Endothelial cell of umbilical vein (primary cell): ENCODE measurements at regions of chr12 and their contacts with region 1.

Region 1: GRCh38 chr12:120228291-120229070 is 27.6 kb upstream of the RPLP0 start:
- DNase-seq: peak; percentile 80
- H3K4me3 ChIP-seq: no peak overlapping the region
- H3K27ac ChIP-seq: peak overlapping the region; percentile 100
- H3K4me1 ChIP-seq: peaks cover 72% of the 10 kb centered on the region
- H3K27me3 ChIP-seq: no peaks in the 10 kb centered on the region
- CTCF ChIP-seq: peak; percentile 90 to 94
- POLR2A ChIP-seq: no peak

Region 2: GRCh38 chr12:120194534-120195395 is 33.7 kb before region 1 on chr12 and contains the start of gene GCN1:
- CTCF ChIA-PET with region 1: interaction called, 32 read pairs
- POLR2A ChIA-PET with region 1: interaction called, 46 read pairs
- dilution Hi-C with region 1: no loop called
- intact Hi-C with region 1: no loop called
- DNase-seq: peak; percentile 85
- H3K4me3 ChIP-seq: peak within 1 kb of the TSS; percentile 22 to 76 (median 67)
- H3K27ac ChIP-seq: peak within 1 kb of the TSS; percentile 74
- H3K4me1 ChIP-seq: peaks cover 48% of the 10 kb centered on the region
- H3K27me3 ChIP-seq: no peaks in the 10 kb centered on the region
- CTCF ChIP-seq: no peak
- POLR2A ChIP-seq: peak; percentile 59
- total RNA-seq, gene GCN1: 79.1 and 101 TPM in 2 replicates

Region 3: DNA sequence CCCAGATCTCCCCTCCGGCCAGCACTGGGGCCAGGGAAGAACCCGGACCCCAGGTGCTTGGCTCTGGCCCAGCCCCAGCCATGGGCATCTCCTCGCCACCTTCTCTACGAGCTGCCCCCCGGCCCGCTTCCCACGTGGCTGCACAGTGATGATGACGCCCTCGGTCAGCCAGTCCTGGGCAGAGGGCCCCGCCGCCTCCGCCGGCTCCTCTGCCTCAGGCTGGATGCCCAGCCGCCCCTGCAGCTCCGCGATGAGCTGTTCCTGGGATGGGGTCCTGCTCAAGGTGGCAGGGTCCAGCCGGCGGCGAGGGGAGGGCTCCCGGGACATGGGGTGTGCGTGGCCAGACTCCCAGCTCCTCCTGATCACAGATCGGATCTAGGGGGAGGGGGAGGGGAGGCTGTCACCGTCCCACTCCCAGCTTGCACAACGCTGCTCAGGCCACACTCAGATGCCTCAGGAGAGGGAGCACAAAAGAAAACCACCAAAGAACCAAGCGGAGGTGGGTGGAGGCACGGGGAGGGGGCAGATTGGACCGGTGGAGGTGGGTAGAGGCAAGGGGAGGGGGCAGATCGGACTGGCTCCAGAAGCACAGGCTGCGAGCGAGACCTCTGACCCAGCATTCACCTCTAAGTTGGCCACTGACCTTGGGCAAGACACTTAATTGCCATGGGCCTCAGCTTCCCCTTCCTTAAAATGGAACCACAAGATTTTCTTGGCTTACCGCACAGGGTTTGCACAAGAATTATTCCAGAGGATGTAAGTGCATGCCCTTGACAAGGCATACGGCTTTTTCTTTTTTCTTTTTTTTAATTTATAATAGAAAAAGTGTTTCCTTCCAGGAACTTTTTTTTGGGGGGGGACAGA is 11.5 kb before region 1 on chr12:
- CTCF ChIA-PET with region 1: interaction called, 22 read pairs
- POLR2A ChIA-PET with region 1: no interaction called
- dilution Hi-C with region 1: no loop called
- intact Hi-C with region 1: no loop called
- DNase-seq: no peak
- H3K4me3 ChIP-seq: no peak overlapping the region
- H3K27ac ChIP-seq: no peak overlapping the region
- H3K4me1 ChIP-seq: no peaks in the 10 kb centered on the region
- H3K27me3 ChIP-seq: no peaks in the 10 kb centered on the region
- CTCF ChIP-seq: no peak
- POLR2A ChIP-seq: peak; percentile 25

Region 4: DNA sequence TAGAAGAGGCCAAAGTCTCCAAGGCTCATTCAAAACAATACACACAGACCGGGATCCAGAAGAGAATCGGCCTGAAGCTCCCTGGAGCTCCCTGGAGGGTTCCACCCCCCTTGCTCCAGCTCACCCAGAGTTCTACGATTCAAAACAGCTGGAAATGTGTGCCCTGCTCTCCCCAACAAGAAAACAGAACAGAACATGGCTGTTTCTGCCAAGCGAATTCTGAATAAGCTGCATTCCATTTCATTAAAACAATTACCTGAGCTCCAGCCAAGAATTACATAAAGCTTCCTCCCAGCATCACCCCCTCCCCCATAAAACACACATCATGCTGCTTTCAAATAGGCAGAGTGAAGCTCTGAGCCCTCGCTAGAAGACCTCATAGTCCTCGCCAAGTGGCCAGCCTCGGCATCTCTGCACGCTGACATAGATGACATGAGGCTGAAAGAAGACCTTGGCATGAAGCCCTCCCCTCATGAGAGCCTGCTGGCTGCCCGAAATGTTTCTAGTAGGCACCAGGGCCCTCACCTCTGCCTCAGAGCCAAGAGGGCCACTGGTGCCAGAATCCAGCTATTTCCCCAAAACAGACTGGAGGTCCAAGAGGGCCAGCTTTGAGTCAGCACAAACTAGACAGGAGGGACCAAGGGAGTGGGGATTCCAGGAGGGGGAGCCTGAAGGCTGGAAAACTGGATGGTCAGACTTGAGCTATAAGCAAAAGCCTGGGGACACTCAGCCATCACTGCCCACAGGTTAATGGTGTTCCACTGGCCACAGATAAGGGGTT is 28.8 kb after region 1 on chr12:
- CTCF ChIA-PET with region 1: interaction called, 1,402 read pairs
- POLR2A ChIA-PET with region 1: interaction called, 88 read pairs
- dilution Hi-C with region 1: no loop called
- intact Hi-C with region 1: loop called (anchors 1 kb)
- DNase-seq: peak; percentile 98
- H3K4me3 ChIP-seq: no peak overlapping the region
- H3K27ac ChIP-seq: peak overlapping the region; percentile 96
- H3K4me1 ChIP-seq: peaks cover 71% of the 10 kb centered on the region
- H3K27me3 ChIP-seq: no peaks in the 10 kb centered on the region
- CTCF ChIP-seq: no peak
- POLR2A ChIP-seq: peak; percentile 24

Region 5: GRCh38 chr12:120276734-120277133 is 48.3 kb after region 1 on chr12:
- CTCF ChIA-PET with region 1: interaction called, 13 read pairs
- POLR2A ChIA-PET with region 1: no interaction called
- dilution Hi-C with region 1: no loop called
- intact Hi-C with region 1: no loop called
- DNase-seq: no peak
- H3K4me3 ChIP-seq: no peak overlapping the region
- H3K27ac ChIP-seq: no peak overlapping the region
- H3K4me1 ChIP-seq: no peaks in the 10 kb centered on the region
- H3K27me3 ChIP-seq: no peaks in the 10 kb centered on the region
- CTCF ChIP-seq: no peak
- POLR2A ChIP-seq: no peak

Region 6: DNA sequence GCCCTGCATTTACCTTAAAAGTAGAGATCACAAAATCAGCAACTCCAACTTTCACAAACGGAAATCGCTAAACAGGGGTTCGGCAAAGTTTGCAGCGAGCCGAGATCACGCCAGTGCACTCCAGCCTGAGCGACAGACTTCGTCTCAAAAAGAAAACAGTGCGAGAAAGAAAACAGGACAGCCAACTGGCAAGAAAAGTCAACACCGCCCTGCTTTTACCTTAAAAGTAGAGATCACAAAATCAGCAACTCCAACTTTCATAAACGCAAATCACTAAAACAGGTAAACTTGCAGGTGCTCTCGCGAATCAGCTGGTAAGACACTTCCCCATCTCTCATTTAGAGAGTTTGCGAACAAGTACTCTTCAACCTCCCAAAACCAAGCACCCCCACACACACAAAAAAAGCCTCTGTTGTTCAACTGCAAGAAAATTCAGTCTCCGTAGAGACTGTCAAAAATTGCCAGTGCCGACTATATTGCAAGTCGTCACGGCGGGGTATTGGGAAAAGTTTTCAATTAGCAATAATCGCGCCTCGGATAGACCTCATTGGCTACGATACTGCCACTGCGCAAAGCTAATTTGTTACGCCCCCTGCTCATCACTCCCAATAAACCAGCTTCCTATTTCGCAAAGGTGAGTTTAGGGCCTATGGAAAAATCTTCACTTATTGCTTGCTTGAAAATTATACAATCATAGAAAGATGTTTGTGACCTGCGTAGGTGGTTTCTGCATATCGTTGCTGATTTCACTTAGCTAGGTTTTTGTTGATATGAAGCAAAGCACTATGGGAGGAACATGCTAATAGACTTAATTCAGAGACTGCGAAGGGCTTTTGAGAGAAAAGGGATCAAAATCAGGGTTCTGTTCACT is 64.4 kb after region 1 on chr12 and contains the start of gene RNU4-1:
- CTCF ChIA-PET with region 1: interaction called, 99 read pairs
- POLR2A ChIA-PET with region 1: interaction called, 211 read pairs
- dilution Hi-C with region 1: no loop called
- intact Hi-C with region 1: loop called (anchors 1 kb)
- DNase-seq: peak; percentile 89
- H3K4me3 ChIP-seq: peak within 1 kb of the TSS; percentile 22 to 64 (median 45)
- H3K27ac ChIP-seq: peak within 1 kb of the TSS; percentile 100
- H3K4me1 ChIP-seq: peaks cover 9% of the 10 kb centered on the region
- H3K27me3 ChIP-seq: no peaks in the 10 kb centered on the region
- CTCF ChIP-seq: no peak
- POLR2A ChIP-seq: peak; percentile 100
- total RNA-seq, gene RNU4-1: 2,141 and 7,155 TPM in 2 replicates